ENCODE measurements at regions of chr3 and their contacts with region 1.

Region 1: DNA sequence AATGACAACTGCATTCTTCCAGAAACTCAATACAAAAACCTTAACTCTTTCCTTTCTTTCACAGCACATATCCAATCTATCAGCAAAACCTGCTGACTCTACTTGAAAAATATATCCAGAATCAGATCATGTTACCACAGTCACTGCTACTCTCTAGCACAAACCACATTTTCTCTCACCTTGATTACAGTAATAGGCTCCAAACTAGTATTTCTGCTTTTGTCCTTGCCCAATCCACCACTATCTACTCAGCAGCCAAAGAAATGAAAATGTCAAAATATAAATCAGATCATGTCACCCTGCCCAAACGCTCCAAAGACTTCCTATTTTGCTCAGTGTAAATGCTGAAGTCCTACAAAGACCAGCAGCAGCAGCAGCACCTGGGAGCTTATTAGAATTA is 15.1 kb downstream of the TMCC1 start:
- DNase-seq: no peak
- ATAC-seq: no peak
- H3K4me3 ChIP-seq: no peak overlapping the region
- H3K27ac ChIP-seq: no peak overlapping the region
- H3K4me1 ChIP-seq: no peaks in the 10 kb centered on the region
- H3K27me3 ChIP-seq: no peaks in the 10 kb centered on the region
- CTCF ChIP-seq: no peak
- EP300 ChIP-seq: no peak
- POLR2A ChIP-seq: no peak
- RAD21 ChIP-seq: no peak

Region 2: DNA sequence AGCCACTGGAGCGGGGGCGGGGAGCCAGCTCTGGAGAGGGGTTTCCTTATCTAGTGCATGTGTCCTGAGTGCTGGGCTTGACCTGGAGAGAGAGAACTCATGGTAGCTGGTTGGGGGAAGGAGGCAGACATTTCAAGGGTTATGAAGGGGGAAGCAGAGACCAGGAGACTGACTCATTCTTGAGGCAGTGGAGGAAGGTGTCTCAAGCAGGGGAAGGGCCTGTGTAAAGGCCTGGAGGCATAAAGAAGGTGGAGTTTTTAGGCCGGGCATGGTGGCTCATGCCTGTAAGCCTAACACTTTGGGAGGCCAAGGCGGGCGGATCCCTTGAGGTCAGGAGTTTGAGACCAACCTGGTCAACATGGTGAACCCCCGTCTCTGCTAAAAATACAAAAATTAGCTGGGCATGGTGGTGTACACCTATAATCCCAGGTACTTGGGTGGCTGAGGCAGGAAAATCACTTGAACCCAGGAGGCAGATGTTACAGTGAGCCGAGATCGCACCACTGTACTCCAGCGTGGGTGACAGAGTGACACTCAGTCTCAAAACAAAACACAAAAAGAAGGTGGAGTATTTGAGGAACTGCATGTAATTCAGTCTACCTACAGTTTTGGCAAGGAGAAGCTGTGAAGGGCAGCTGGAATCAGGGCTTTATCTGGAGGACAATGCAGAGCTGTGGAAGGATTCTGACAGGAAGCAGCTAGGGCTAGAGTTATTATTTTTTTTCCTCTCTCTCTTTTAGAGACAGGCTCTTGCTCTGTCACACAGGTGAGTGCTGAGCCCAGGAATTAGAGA is 328.8 kb before region 1 on chr3:
- CTCF ChIA-PET with region 1: no interaction called
- POLR2A ChIA-PET with region 1: no interaction called
- RAD21 ChIA-PET with region 1: no interaction called
- SMC1A ChIA-PET with region 1: no interaction called
- in situ Hi-C with region 1: no loop called
- intact Hi-C with region 1: no loop called
- DNase-seq: no peak
- ATAC-seq: no peak
- H3K4me3 ChIP-seq: no peak overlapping the region
- H3K27ac ChIP-seq: no peak overlapping the region
- H3K4me1 ChIP-seq: no peaks in the 10 kb centered on the region
- H3K27me3 ChIP-seq: peaks cover 2 to 7% of the 10 kb centered on the region in 2 experiments; a peak in 3 of 4 replicates
- CTCF ChIP-seq: no peak
- EP300 ChIP-seq: no peak
- POLR2A ChIP-seq: no peak
- RAD21 ChIP-seq: no peak

Region 3: DNA sequence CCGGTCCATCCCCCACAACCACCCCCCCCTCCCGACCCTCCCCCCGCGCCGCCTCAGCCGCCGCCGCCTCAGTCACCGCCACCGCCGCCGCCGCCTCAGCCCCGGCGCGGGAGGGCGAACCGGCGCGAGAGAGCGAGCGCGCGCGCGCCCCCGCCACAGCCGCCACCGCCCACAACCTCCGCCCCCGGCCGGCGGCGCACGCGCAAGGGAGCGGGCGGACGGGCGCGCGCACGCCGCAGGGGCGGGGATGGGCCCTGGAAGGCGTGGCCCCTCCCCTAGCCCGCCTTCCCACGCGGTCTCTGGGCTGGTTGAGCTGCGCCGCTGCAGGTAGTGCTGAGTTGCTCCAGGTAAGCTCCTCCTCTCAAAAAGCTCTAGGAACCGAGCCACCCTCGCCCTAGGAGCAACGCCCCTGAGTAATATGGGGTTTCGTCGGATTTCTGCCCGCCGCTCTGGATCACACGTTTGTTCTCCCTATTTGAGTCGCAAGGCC is 15.3 kb after region 1 on chr3 and contains the start of gene TMCC1:
- CTCF ChIA-PET with region 1: interaction called, 4 read pairs
- POLR2A ChIA-PET with region 1: no interaction called
- RAD21 ChIA-PET with region 1: interaction called, 3 read pairs
- SMC1A ChIA-PET with region 1: interaction called, 24 read pairs
- in situ Hi-C with region 1: no loop called
- intact Hi-C with region 1: no loop called
- DNase-seq: peak; percentile 58
- ATAC-seq: peak; percentile 83
- H3K4me3 ChIP-seq: peak within 1 kb of the TSS; percentile 77
- H3K27ac ChIP-seq: peak within 1 kb of the TSS; percentile 95
- H3K4me1 ChIP-seq: peaks cover 22% of the 10 kb centered on the region
- H3K27me3 ChIP-seq: no peaks in the 10 kb centered on the region
- CTCF ChIP-seq: no peak
- EP300 ChIP-seq: no peak
- POLR2A ChIP-seq: no peak; the same call in 1 of the 2 replicates
- RAD21 ChIP-seq: no peak
- polyA plus RNA-seq, gene TMCC1: 2.3 to 3.1 TPM

Measured in GM12878 (cell line).